ENCODE measurements at regions of chr5 and their contacts with region 1.

Region 1: GRCh38 chr5:137629646-137630045 is 106.2 kb downstream of the KLHL3 start:
- H3K4me3 Mint-ChIP-seq: no peak overlapping the region
- H3K27ac Mint-ChIP-seq: no peak overlapping the region
- H3K4me1 Mint-ChIP-seq: peaks cover 15% of the 10 kb centered on the region
- H3K27me3 Mint-ChIP-seq: no peaks in the 10 kb centered on the region

Region 2: DNA sequence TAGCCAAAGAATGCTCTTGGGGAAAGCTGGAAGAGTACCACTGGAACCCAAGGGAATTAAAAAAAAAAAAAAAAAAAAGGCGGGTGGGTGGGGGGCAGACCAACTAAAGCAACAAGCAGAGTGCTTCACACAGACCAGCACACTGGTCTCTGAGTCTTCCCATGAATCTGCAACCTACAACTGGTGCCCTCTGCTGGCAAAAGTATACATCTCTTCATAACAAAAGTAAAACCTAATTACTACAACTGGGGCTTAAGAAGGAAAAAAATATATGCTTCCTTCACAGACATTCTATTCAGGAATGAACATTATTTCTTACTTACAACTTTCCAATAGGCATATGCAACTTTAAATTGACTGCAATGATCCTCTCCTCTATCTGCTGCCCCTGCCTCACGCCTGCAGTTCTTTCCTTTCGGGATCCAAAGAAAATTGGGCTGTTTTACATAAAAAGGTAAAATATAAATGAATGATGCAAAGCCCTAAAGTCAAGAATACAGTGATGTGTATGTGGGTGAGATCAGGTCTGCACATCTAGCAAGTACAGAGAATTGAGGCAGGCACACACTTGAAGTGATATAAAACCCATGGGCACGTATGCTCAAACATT is 113.5 kb after region 1 on chr5:
- intact Hi-C with region 1: loop called (anchors 1 kb)
- H3K4me3 Mint-ChIP-seq: no peak overlapping the region
- H3K27ac Mint-ChIP-seq: no peak overlapping the region
- H3K4me1 Mint-ChIP-seq: no peaks in the 10 kb centered on the region
- H3K27me3 Mint-ChIP-seq: no peaks in the 10 kb centered on the region

Region 3: GRCh38 chr5:138065102-138065501 is 435.5 kb after region 1 on chr5:
- intact Hi-C with region 1: loop called (anchors 10 kb)
- H3K4me3 Mint-ChIP-seq: no peak overlapping the region
- H3K27ac Mint-ChIP-seq: no peak overlapping the region
- H3K4me1 Mint-ChIP-seq: peaks cover 15% of the 10 kb centered on the region
- H3K27me3 Mint-ChIP-seq: peaks cover 5% of the 10 kb centered on the region

Measured in dendritic cell treated with granulocyte-macrophage colony-stimulating factor and Interleukin-4, amounts not matched to agents 40 ng/mL and 50 ng/mL, for 4 days (primary cell).